ENCODE measurements at regions of chr4 and their contacts with region 1.

Region 1: GRCh38 chr4:155953151-155954114 is at the start of gene CTSO:
- DNase-seq: peak; percentile 69
- H3K4me3 Mint-ChIP-seq: peak within 1 kb of the TSS; percentile 98
- H3K27ac Mint-ChIP-seq: peak within 1 kb of the TSS; percentile 98
- H3K4me1 Mint-ChIP-seq: peaks cover 10% of the 10 kb centered on the region
- H3K27me3 Mint-ChIP-seq: peaks cover 8% of the 10 kb centered on the region
- total RNA-seq, gene CTSO: 0.73 and 0.93 TPM in 2 replicates

Region 2: GRCh38 chr4:154982187-154983047 is 971.0 kb before region 1 on chr4:
- intact Hi-C with region 1: loop called (anchors 5 kb)
- DNase-seq: peak; percentile 2
- H3K4me3 Mint-ChIP-seq: no peak overlapping the region
- H3K27ac Mint-ChIP-seq: no peak overlapping the region
- H3K4me1 Mint-ChIP-seq: no peaks in the 10 kb centered on the region
- H3K27me3 Mint-ChIP-seq: peaks cover 4% of the 10 kb centered on the region

Region 3: DNA sequence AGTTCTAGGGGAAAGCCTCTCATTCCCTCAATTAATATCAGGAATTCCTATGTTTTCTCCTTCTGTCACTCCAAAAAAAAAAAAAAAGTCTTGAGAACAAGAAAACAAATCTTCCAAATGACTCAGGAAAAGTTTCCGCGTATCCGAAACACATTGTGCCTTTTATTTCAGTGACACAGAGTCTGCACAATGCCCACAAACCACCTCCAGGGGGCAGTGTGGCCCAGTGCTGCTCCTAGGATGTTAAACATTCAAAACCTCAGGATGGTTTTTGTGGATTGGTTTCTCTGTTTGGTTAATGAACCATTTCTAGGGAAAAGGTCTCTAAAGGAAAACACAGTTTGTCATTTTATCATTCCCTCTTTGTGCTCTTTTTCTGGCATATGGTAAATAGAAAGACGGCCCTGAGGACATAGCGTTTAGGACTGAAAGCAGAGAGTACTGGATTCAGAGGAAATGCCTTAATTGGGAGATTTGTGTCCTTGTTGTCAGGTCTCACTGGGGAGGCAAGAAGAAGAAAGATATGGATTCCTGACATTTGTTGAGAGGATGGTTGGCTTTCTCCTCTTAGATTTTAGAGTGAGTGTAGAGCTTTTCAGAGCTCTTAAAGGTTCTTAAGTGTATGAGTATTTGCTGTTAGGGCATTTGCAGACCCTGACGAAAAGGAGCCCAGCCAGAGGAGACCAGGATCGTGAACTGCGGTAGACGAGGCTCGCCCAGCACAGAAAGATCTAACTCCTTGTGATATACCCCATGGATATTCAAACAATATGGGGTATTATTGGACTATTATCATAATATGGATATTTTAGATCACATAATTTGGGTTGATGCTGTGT is 510.9 kb before region 1 on chr4:
- intact Hi-C with region 1: loop called (anchors 1 kb)
- DNase-seq: peak; percentile 25
- H3K4me3 Mint-ChIP-seq: no peak overlapping the region
- H3K27ac Mint-ChIP-seq: no peak overlapping the region
- H3K4me1 Mint-ChIP-seq: peaks cover 6% of the 10 kb centered on the region
- H3K27me3 Mint-ChIP-seq: peaks cover 11% of the 10 kb centered on the region

Region 4: GRCh38 chr4:155787113-155787710 is 166.2 kb before region 1 on chr4:
- intact Hi-C with region 1: loop called (anchors 1 kb)
- DNase-seq: peak; percentile 2
- H3K4me3 Mint-ChIP-seq: no peak overlapping the region
- H3K27ac Mint-ChIP-seq: no peak overlapping the region
- H3K4me1 Mint-ChIP-seq: no peaks in the 10 kb centered on the region
- H3K27me3 Mint-ChIP-seq: no peaks in the 10 kb centered on the region

Region 5: GRCh38 chr4:156968479-156968984 is 1015.1 kb after region 1 on chr4:
- intact Hi-C with region 1: loop called (anchors 10 kb)
- DNase-seq: no peak
- H3K4me3 Mint-ChIP-seq: no peak overlapping the region
- H3K27ac Mint-ChIP-seq: no peak overlapping the region
- H3K4me1 Mint-ChIP-seq: peaks cover 7% of the 10 kb centered on the region
- H3K27me3 Mint-ChIP-seq: peaks cover 37% of the 10 kb centered on the region